ENCODE measurements at regions of chr13 and their contacts with region 1.

Region 1: DNA sequence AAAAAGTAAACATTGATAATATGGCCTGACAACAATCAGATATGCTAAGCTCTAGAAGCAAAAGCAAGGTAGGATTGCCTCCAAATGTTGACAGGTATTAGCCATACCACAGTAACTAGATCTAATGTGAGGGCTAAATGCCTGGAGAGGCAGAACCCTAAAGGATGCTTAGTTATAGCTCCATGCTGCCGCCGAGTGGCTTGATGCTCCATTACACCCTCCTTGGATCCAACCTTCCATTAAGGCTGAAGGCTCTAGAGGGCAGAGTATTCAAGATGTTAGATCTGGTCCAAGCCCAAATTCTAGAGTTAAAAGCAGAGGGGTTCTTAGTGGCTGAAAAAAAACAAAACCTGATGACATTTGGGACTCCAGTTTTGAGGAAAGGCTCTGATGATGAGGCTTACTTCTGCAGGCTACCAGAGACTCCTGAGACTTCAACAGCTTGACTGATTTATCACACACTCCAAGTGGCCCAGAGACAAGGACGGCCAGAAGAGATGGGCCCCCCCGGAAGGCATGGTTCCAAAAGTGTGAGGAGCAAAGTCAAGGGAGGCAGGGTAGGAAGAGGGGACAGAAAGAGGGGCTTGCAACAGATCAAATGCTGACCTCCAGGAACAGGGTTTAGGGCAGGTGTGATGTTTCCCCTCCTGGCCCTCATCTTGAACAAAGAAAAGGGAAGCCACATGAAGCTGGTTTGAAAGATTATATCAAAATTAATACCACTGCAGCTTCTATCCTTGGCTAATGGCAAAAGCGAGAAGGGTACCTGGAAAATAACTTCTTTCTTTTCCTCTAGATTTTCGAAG is 21.9 kb upstream of the CPB2 start:
- DNase-seq: peak; percentile 96
- H3K4me3 ChIP-seq: no peak overlapping the region
- H3K27ac ChIP-seq: peak overlapping the region; percentile 99
- H3K4me1 ChIP-seq: peaks cover 58% of the 10 kb centered on the region
- H3K27me3 ChIP-seq: no peaks in the 10 kb centered on the region
- CTCF ChIP-seq: peak; percentile 95

Region 2: GRCh38 chr13:45511310-45512097 is 615.3 kb before region 1 on chr13:
- CTCF ChIA-PET with region 1: interaction called, 5 read pairs
- POLR2A ChIA-PET with region 1: no interaction called
- intact Hi-C with region 1: loop called (anchors 5 kb)
- DNase-seq: peak; percentile 87
- H3K4me3 ChIP-seq: no peak overlapping the region
- H3K27ac ChIP-seq: no peak overlapping the region
- H3K4me1 ChIP-seq: peaks cover 21% of the 10 kb centered on the region
- H3K27me3 ChIP-seq: no peaks in the 10 kb centered on the region
- CTCF ChIP-seq: peak; percentile 84

Region 3: DNA sequence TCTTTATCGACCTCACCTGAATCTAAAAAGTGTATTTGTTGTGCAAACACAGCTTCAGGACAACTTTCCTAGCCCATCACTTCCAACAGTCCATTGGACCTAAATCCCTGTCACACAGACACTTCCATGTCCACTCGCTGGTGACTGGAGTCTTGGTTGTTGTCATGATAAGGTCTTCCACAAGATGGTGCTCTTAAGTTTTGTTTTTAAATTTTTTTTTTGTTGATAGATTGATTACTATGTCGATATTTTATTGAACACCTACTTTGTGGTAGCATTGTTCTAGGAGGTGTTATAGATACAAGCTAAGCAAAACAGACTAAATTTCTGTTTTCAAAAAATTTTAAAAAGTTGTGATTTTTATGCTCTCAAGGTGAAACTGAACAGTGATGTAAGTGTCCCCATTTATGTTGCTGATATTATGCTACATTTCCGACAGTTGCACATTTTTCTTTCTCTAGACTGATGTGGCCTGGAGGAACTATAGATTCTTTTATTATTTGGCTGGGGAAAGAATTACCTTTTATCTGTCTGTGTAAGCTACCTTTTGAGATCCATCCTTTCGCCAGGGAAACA is 503.2 kb before region 1 on chr13:
- CTCF ChIA-PET with region 1: interaction called, 3 read pairs
- POLR2A ChIA-PET with region 1: no interaction called
- intact Hi-C with region 1: loop called (anchors 5 kb)
- DNase-seq: peak; percentile 57
- H3K4me3 ChIP-seq: no peak overlapping the region
- H3K27ac ChIP-seq: no peak overlapping the region
- H3K4me1 ChIP-seq: peaks cover 16% of the 10 kb centered on the region
- H3K27me3 ChIP-seq: no peaks in the 10 kb centered on the region
- CTCF ChIP-seq: peak; percentile 77

Region 4: DNA sequence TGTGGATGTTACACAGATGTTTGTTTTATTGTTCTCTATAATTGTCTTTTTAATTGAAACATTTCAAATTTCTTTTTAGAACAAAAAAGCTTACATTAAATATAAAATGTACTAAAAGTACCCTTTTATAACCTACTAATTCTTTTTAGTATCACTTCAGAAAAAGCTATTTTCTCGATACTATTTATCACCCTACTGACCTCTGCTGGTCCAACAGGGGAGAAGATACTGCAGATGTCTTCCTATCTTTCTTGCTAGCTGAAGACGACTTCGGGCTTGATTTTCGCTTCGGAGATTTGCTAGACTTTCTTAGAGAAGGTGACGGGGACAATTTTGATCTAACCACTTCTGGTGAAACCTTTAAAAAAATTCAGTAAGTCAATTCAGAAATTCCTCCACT is 116.6 kb before region 1 on chr13:
- CTCF ChIA-PET with region 1: interaction called, 11 read pairs
- POLR2A ChIA-PET with region 1: no interaction called
- intact Hi-C with region 1: no loop called
- DNase-seq: peak; percentile 68
- H3K4me3 ChIP-seq: no peak overlapping the region
- H3K27ac ChIP-seq: peak overlapping the region; percentile 32
- H3K4me1 ChIP-seq: peaks cover 55% of the 10 kb centered on the region
- H3K27me3 ChIP-seq: no peaks in the 10 kb centered on the region
- CTCF ChIP-seq: peak; percentile 66

Region 5: GRCh38 chr13:46146899-46147298 is 20.1 kb after region 1 on chr13:
- CTCF ChIA-PET with region 1: interaction called, 10 read pairs
- POLR2A ChIA-PET with region 1: no interaction called
- intact Hi-C with region 1: no loop called
- DNase-seq: peak; percentile 67
- H3K4me3 ChIP-seq: no peak overlapping the region
- H3K27ac ChIP-seq: no peak overlapping the region
- H3K4me1 ChIP-seq: peaks cover 53% of the 10 kb centered on the region
- H3K27me3 ChIP-seq: no peaks in the 10 kb centered on the region
- CTCF ChIP-seq: peak; percentile 70

Measured in A673 (cell line).